ENCODE measurements at regions of chr18 and their contacts with region 1.

Region 1: DNA sequence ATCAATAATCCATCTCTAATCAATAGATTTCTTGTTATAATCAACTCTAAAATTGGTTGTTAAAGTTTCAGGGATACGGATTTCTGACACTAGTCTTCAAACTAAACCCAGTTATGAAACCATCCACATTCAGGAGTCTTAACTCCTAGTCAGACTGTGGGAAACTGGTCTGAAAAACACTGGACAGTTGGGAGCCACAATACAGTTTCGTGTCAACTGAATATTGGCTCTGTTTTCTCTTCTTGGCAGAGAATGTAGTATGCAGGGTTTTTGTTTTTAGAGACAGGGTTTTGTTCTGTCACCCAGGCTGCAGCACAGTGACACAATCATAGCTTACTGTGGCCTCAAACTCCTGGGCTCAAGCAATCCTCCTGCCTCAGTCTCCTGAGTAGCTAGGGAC is 123.1 kb downstream of the RTTN start:
- DNase-seq: no peak
- H3K4me3 Mint-ChIP-seq: no peak overlapping the region
- H3K27ac Mint-ChIP-seq: no peak overlapping the region
- H3K4me1 Mint-ChIP-seq: no peaks in the 10 kb centered on the region
- H3K27me3 Mint-ChIP-seq: no peaks in the 10 kb centered on the region

Region 2: GRCh38 chr18:68925268-68925667 is 1157.2 kb before region 1 on chr18:
- intact Hi-C with region 1: loop called (anchors 10 kb)
- DNase-seq: no peak
- H3K4me3 Mint-ChIP-seq: no peak overlapping the region
- H3K27ac Mint-ChIP-seq: no peak overlapping the region
- H3K4me1 Mint-ChIP-seq: no peaks in the 10 kb centered on the region
- H3K27me3 Mint-ChIP-seq: peaks cover 5% of the 10 kb centered on the region

Region 3: GRCh38 chr18:69469444-69469919 is 612.9 kb before region 1 on chr18:
- intact Hi-C with region 1: loop called (anchors 1 kb)
- DNase-seq: no peak
- H3K4me3 Mint-ChIP-seq: no peak overlapping the region
- H3K27ac Mint-ChIP-seq: no peak overlapping the region
- H3K4me1 Mint-ChIP-seq: no peaks in the 10 kb centered on the region
- H3K27me3 Mint-ChIP-seq: no peaks in the 10 kb centered on the region

Region 4: DNA sequence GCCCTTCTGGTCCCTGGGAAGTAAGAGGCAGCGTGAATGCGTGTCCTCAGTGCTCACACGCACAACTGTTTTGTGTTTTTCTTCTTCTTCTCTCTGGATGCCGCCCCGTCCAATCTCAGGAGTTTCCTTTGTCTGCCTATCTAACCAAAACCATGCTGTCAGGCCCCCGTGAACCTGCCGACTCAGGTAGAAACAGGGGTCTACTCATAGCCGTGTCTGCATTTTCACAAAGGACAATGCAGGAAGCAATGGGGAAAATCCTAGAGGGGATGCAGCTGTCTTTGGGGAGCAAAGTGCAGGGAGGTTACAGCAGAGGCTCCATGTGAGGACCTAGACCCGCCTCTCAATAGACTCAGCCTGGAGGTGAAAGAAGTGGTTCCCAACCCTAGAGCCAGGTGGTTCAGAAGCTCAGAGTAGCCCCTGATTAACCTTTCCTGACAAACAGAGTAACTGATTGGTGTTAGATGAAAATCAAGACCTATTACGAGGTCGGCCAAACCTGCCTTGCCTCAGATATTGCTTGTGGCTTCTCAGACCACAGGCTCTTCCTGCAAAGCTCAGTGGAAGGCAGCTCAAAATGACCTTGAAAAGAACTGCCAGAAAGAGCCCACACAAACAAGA is 184.1 kb before region 1 on chr18:
- intact Hi-C with region 1: loop called (anchors 2 kb)
- DNase-seq: no peak
- H3K4me3 Mint-ChIP-seq: peak overlapping the region; percentile 78
- H3K27ac Mint-ChIP-seq: peak overlapping the region; percentile 97
- H3K4me1 Mint-ChIP-seq: peaks cover 78% of the 10 kb centered on the region
- H3K27me3 Mint-ChIP-seq: no peaks in the 10 kb centered on the region

Region 5: GRCh38 chr18:69958422-69958821 is 124.0 kb before region 1 on chr18:
- intact Hi-C with region 1: loop called (anchors 1 kb)
- DNase-seq: no peak
- H3K4me3 Mint-ChIP-seq: no peak overlapping the region
- H3K27ac Mint-ChIP-seq: no peak overlapping the region
- H3K4me1 Mint-ChIP-seq: peaks cover 16% of the 10 kb centered on the region
- H3K27me3 Mint-ChIP-seq: peaks cover 1% of the 10 kb centered on the region

Measured in activated T-helper 1 cell treated with anti-CD3 and anti-CD28 coated beads, Interleukin-12 subunit alpha, Interleukin-12 subunit beta, Interleukin-2, Interleukin-4 antibody, amounts not matched to agents 30 ng/mL and 10 ng/mL and 1 ng/mL, durations not matched to agents 14 hours and 24 hours and 36 hours (primary cell).